H1 (cell line): ENCODE measurements at regions of chr22 and their contacts with region 1.

Region 1: DNA sequence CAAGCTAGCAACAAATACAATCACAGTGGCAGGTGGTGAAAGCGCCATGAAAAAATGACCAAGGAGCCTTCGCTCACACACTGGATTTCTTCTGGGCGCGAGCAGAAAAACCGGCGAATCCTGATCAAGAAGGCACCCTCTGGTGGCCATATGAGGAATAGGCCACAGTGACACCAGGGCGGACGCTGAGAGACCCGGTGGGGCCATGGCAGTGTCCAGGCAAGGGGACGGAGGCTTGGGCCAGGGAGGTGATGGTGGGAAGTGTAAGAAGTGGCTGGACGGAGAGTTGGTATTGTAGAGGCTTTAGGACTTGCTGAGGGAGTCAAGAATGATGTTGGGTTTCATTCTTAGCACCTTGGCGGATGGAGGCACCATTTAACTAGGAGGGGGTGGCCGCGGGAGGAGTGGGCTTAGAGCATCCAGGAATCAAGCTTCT is 16.9 kb upstream of the RAC2 start:
- DNase-seq: peak in 1 of 2 experiments; percentile 78
- H3K4me3 ChIP-seq: no peak overlapping the region
- H3K27ac ChIP-seq: no peak overlapping the region
- H3K4me1 ChIP-seq: peaks cover 4 to 12% (median 5%) of the 10 kb centered on the region in 4 experiments
- H3K27me3 ChIP-seq: peaks cover 0 to 12% (median 7%) of the 10 kb centered on the region in 4 experiments; a peak in 2 of 7 replicates
- CTCF ChIP-seq: peak; percentile 85 to 95 (median 93)
- EP300 ChIP-seq: no peak
- POLR2A ChIP-seq: no peak
- RAD21 ChIP-seq: peak; percentile 62 to 75; a peak in 3 of 4 replicates

Region 2: GRCh38 chr22:36988075-36988832 is 272.7 kb before region 1 on chr22:
- CTCF ChIA-PET with region 1: no interaction called
- POLR2A ChIA-PET with region 1: no interaction called
- DNase-seq: no peak
- H3K4me3 ChIP-seq: no peak overlapping the region
- H3K27ac ChIP-seq: no peak overlapping the region
- H3K4me1 ChIP-seq: no peaks in the 10 kb centered on the region
- H3K27me3 ChIP-seq: peaks cover 0 to 3% (median 0%) of the 10 kb centered on the region in 4 experiments; a peak in 1 of 7 replicates
- CTCF ChIP-seq: no peak
- EP300 ChIP-seq: no peak
- POLR2A ChIP-seq: no peak
- RAD21 ChIP-seq: no peak

Region 3: GRCh38 chr22:37063431-37064420 is 197.2 kb before region 1 on chr22:
- CTCF ChIA-PET with region 1: no interaction called
- POLR2A ChIA-PET with region 1: no interaction called
- DNase-seq: no peak
- H3K4me3 ChIP-seq: no peak overlapping the region
- H3K27ac ChIP-seq: no peak overlapping the region
- H3K4me1 ChIP-seq: peaks cover 3 to 27% (median 15%) of the 10 kb centered on the region in 4 experiments
- H3K27me3 ChIP-seq: peaks cover 0 to 32% (median 25%) of the 10 kb centered on the region in 4 experiments; a peak in 6 of 7 replicates
- CTCF ChIP-seq: no peak
- EP300 ChIP-seq: no peak
- POLR2A ChIP-seq: no peak
- RAD21 ChIP-seq: no peak

Region 4: DNA sequence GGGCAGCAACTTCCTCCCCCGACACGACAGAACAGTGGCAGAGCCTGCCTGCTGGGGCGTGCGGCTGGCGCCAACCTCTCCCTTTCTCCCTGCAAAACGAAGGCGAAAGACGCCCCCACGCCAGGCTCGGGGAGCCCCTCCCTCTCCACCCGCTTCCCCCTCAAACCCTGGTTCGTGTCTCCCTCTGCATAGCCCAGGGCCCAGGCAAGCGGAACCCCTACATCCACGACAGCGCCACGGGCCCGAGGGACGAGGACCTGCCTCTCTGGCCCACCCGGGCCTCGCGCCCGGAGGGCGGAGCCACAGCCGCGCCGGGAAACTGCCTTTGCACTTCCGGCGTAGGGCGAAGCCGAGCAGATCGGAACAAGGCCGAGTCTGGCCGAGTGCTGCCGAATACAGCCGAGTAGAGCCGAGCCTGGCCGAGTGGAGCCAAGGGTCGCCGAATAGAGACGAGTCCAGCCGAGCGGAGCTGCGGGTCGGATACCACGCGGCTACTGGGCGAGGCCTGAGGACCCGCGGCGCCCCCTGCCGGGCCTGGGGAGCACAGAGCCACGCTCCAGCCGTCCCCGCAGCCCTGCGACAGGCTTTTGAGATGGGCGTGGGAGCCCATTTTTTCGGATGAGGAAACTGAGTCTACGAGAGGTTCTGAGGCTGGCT is 61.7 kb before region 1 on chr22:
- CTCF ChIA-PET with region 1: interaction called, 21 read pairs
- POLR2A ChIA-PET with region 1: no interaction called
- DNase-seq: peak; percentile 97 to 100
- H3K4me3 ChIP-seq: peak overlapping the region; percentile 61 to 78 (median 73)
- H3K27ac ChIP-seq: no peak overlapping the region
- H3K4me1 ChIP-seq: peaks cover 3 to 19% (median 10%) of the 10 kb centered on the region in 4 experiments; a peak in 5 of 7 replicates
- H3K27me3 ChIP-seq: no peaks in the 10 kb centered on the region
- CTCF ChIP-seq: peak; percentile 82 to 87 (median 82)
- EP300 ChIP-seq: no peak
- POLR2A ChIP-seq: peak in 1 of 2 experiments; percentile 84; a peak in 2 of 3 replicates
- RAD21 ChIP-seq: peak; percentile 63 to 66

Region 5: DNA sequence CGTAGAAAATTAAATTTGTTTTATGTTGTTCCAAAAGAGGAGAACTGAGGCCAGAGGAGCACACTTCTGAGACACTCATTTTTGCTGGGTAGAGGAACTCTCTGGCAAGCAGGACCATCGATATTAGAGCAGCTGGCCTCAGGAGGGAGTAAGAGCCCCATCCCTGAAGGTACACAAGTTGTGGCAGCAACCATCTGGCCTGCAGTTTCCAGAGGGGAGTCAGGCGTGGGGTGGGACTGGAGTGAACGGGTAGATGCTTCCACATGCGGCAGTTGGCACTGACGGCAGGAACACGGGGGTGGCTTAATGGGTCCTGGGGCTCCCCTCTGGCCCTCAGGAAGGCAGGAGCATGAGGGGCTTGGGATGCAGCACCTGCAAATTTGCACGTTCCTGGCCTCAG is 35.4 kb before region 1 on chr22:
- CTCF ChIA-PET with region 1: interaction called, 22 read pairs
- POLR2A ChIA-PET with region 1: no interaction called
- DNase-seq: no peak
- H3K4me3 ChIP-seq: no peak overlapping the region
- H3K27ac ChIP-seq: no peak overlapping the region
- H3K4me1 ChIP-seq: no peaks in the 10 kb centered on the region
- H3K27me3 ChIP-seq: no peaks in the 10 kb centered on the region
- CTCF ChIP-seq: peak; percentile 7 to 26 (median 11); a peak in 3 of 4 replicates
- EP300 ChIP-seq: no peak
- POLR2A ChIP-seq: no peak
- RAD21 ChIP-seq: peak; percentile 52 to 62

Region 6: DNA sequence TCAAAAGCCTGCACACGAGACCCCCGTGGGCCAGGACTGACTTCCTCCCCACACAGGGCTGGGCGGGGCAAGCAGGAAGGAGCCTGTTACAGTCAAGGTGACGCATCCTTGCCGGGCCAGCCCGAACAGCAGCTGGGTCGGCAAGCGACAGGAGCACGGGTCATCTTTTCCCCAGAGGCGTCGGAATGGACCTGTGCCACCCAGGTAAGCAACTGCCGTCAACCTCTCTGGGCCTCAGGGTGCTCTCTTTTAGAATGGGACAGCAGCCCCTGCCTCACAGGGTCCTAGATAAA is 21.4 kb after region 1 on chr22 and contains the start of gene CYTH4:
- CTCF ChIA-PET with region 1: interaction called, 32 read pairs
- POLR2A ChIA-PET with region 1: no interaction called
- DNase-seq: no peak
- H3K4me3 ChIP-seq: no peak within 1 kb of the TSS
- H3K27ac ChIP-seq: no peak within 1 kb of the TSS
- H3K4me1 ChIP-seq: peaks cover 0 to 15% (median 4%) of the 10 kb centered on the region in 4 experiments; a peak in 4 of 7 replicates
- H3K27me3 ChIP-seq: no peaks in the 10 kb centered on the region; a peak in 2 of 7 replicates
- CTCF ChIP-seq: no peak
- EP300 ChIP-seq: no peak
- POLR2A ChIP-seq: no peak
- RAD21 ChIP-seq: no peak
- total RNA-seq, gene CYTH4: not detected in 2 replicates

Region 7: DNA sequence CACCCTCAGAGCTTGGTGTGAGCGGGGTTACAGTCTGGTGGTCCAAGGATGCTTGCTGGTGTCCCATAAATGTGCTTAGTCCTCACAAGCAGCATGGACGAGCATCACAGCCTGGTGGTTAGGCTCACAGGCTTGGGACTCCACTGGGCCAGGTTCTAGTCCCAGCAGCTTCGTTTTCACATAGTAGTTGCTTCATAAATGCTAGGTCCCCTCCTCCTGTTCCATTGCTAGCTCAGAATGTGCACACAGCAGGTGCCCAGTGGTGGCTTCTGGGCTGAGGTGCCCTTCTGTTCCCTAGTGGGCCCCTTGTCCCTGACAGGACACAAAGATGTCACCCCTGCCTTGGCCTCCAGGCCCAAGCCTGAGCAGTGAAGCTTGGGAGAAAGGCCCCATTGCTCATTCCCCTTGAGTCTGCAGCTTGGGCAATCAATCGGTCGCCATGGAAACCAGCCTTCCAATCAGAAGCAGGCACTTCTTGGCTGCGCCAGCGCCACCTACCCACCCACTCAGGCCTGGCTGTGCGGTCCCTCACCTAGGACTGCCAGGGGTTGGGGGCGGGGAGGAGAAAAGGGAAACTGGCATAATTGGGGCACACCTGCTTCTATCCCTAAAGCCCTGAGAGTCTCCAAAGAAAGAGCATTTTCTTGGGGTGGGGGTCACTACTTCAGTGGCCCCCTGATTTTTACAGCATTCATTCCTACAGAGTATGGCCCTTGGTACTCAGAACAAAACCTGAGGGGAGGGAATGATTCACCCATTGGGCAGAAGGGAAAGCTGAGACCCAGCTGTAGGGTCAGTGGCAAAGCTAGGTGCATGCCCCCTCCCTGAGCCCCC is 69.5 kb after region 1 on chr22:
- CTCF ChIA-PET with region 1: interaction called, 10 read pairs
- POLR2A ChIA-PET with region 1: no interaction called
- DNase-seq: peak; percentile 69 to 91
- H3K4me3 ChIP-seq: no peak overlapping the region
- H3K27ac ChIP-seq: no peak overlapping the region
- H3K4me1 ChIP-seq: peaks cover 0 to 15% (median 4%) of the 10 kb centered on the region in 4 experiments; a peak in 5 of 7 replicates
- H3K27me3 ChIP-seq: peaks cover 0 to 27% (median 12%) of the 10 kb centered on the region in 4 experiments; a peak in 5 of 7 replicates
- CTCF ChIP-seq: peak; percentile 44 to 81 (median 73)
- EP300 ChIP-seq: no peak
- POLR2A ChIP-seq: no peak
- RAD21 ChIP-seq: peak; percentile 13 to 21; a peak in 1 of 4 replicates

Region 8: GRCh38 chr22:37353839-37354238 is 92.9 kb after region 1 on chr22:
- CTCF ChIA-PET with region 1: no interaction called
- POLR2A ChIA-PET with region 1: no interaction called
- DNase-seq: no peak
- H3K4me3 ChIP-seq: no peak overlapping the region
- H3K27ac ChIP-seq: no peak overlapping the region
- H3K4me1 ChIP-seq: no peaks in the 10 kb centered on the region
- H3K27me3 ChIP-seq: no peaks in the 10 kb centered on the region
- CTCF ChIP-seq: no peak
- EP300 ChIP-seq: no peak
- POLR2A ChIP-seq: no peak
- RAD21 ChIP-seq: no peak

Region 9: DNA sequence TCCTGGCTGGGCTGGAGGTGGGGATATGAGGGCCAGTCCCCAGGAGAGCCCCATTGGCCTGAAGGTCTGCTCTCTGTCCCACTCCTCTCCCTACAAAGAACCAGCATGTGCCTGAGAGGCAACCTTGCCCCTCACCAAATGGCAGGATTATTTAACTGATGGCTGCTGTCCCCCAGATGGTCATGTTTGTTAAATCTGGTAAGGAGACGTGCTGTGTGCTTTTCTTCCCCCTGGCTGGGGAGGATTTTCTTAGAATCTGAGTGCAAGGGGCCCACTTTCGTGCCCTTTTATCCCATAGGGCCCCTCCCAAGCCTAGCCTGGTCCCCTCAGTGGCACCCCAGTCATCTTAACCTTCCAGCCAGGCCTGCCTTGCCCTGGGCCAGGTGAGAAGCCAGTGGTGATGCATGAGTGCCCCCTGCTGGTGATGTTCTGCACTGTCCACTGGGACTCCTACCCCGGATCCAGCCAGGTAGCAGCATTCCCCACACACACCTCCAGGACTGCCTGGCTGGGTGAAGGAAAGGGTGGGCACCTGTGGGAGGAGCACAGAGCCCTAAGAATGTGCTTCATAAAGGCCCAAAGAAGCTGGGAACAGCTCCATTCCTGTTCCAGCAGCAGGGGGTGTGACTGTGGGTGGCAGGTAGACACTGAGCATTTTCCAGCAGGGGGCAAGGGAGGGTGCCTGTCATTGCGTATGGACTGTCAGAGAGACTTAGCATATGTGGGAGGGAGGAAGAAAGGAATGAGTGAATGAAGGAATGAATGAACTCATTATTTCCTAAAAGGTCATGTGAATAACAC is 196.4 kb after region 1 on chr22:
- CTCF ChIA-PET with region 1: interaction called, 42 read pairs
- POLR2A ChIA-PET with region 1: no interaction called
- DNase-seq: peak; percentile 56 to 97
- H3K4me3 ChIP-seq: no peak overlapping the region
- H3K27ac ChIP-seq: no peak overlapping the region
- H3K4me1 ChIP-seq: no peaks in the 10 kb centered on the region; a peak in 2 of 7 replicates
- H3K27me3 ChIP-seq: no peaks in the 10 kb centered on the region
- CTCF ChIP-seq: peak; percentile 97 to 99 (median 99)
- EP300 ChIP-seq: no peak
- POLR2A ChIP-seq: no peak
- RAD21 ChIP-seq: peak; percentile 98 to 100